Heart right ventricle (tissue), 16 donors: ENCODE measurements at regions of chr12 and their contacts with region 1.

Region 1: DNA sequence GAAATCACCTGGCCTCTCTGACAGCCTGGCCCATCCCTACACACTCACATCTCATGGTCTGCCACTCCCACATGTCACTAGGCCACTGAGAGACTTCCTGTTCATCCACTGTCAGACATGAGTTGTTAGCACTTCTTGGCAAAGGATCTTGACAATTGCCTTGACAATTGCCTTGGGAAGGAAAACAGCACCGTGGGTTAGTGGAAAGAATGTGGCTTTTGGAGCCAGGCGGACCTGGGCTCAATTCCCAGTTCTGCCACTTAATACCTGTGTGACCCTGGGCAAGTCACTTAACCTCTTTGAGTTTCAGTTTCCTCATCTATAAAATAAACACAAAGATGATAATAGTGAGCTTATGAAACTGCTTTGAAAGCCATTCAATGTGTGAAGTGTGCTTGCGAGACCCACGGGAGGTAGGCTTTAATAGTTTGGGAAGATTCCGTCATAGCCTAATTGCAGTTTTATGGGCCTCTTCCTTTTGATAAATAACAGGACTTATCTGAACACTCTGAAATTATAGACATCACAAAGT is 250.4 kb downstream of the C12orf75 start:
- DNase-seq: no peak
- ATAC-seq: peak in 6 of 8 donors; percentile 24 to 61 (median 55)
- H3K4me3 ChIP-seq: no peak overlapping the region
- H3K27ac ChIP-seq: peak overlapping the region in 1 of 10 donors; percentile 30
- H3K4me1 ChIP-seq: peaks cover 0 to 2% (median 0%) of the 10 kb centered on the region in 9 donors
- H3K27me3 ChIP-seq: no peaks in the 10 kb centered on the region
- CTCF ChIP-seq: no peak

Region 2: GRCh38 chr12:105462831-105463230 is 118.1 kb before region 1 on chr12:
- intact Hi-C with region 1: loop called in 1 of 10 experiments (anchors 10 kb)
- DNase-seq: no peak
- ATAC-seq: no peak
- H3K4me3 ChIP-seq: no peak overlapping the region
- H3K27ac ChIP-seq: no peak overlapping the region
- H3K4me1 ChIP-seq: peaks cover 4 to 43% (median 18%) of the 10 kb centered on the region in 9 donors
- H3K27me3 ChIP-seq: no peaks in the 10 kb centered on the region
- CTCF ChIP-seq: no peak